OCI-LY7 (cell line): ENCODE measurements at regions of chr17 and their contacts with region 1.

Region 1: DNA sequence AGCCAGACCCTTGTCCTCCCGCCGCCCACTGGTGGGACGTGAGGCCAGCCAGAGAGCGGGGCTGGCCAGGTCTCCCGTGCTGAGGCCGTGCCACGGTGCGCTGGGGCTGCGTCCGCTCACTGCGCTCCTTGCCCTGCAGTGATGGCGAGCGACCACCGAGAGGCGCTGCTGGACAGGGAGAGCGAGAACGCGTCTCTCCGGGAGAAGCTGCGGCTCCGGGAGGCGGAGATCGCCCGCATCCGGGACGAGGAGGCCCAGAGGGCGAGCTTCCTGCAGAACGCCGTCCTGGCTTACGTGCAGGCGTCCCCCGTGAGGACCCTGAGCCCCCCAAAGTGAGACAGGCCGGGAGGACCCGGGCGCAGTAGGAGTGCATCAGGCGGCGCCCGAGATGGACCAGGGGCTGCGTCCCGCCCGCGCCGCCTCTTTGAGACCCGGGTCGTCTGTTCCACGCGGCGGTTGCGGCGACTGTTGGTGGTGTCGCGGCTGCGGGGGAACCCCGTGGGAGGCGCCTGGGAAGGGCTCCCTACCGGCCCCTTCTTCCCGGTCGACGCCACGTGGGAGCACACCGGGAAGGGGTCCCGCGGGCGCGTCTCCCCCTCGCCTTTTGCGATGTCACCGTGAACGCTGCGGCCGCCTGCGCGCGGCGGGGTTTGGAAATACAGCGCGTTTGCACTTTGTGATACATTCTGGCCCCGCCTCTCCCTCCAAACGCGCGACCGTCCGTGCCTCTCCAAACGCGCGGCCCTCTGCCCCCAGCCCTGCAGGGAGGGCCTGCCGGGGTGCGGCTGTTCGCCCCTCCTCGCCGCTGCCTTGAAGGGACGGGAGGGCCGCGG is 792 bp upstream of the RAC3 start:
- DNase-seq: peak; percentile 85
- H3K4me3 ChIP-seq: peak overlapping the region; percentile 51
- H3K27ac ChIP-seq: no peak overlapping the region
- H3K4me1 ChIP-seq: peaks cover 12% of the 10 kb centered on the region
- CTCF ChIP-seq: peak; percentile 85

Region 2: GRCh38 chr17:82205719-82206508 is 175.2 kb after region 1 on chr17:
- CTCF ChIA-PET with region 1: no interaction called
- POLR2A ChIA-PET with region 1: no interaction called
- intact Hi-C with region 1: loop called (anchors 5 kb)
- DNase-seq: peak; percentile 93
- H3K4me3 ChIP-seq: peak overlapping the region; percentile 36
- H3K27ac ChIP-seq: peak overlapping the region; percentile 29
- H3K4me1 ChIP-seq: peaks cover 18% of the 10 kb centered on the region
- CTCF ChIP-seq: peak; percentile 99